IMR-90 (cell line): ENCODE measurements at regions of chr7 and their contacts with region 1.

Region 1: DNA sequence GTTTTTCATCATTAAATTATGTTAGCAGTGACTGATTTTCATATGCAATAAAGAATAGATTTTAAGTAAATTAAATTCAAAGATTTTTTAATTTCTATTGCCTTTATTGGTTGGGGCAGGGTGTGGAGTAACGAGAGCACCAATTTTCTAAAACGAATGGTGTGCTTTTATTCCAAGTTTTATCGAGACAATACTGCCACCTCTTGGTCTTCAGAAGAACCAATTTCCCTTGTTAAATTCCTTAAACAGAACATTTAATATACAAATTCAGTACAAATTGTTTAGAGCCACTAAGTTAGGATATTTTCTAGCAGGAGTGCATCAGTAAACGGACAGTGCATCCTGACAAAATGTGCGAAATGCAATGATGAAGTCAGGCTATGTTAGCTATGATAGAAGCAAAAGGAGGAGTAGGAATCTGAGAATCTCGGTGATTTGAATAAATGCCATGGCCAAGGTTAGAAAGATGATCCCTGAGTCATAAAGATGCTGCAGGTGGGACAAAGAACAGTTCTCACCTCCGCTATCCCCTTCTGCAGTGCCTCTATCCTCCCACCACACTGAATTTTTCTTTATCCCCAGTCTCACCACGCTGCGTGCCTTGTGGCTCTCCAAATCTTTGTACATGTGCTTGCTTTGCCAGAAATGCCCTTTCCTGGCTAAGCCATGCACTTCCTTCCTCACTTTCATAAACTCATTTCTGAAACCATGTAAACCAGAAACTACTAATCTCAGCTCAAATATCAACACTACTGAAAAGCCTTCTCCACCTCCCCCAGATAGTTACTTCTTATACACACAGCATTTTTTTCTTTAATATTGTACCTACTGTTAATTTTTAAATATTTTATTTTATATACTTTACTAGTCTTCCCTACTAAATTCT is 31.9 kb upstream of the AGBL3 start:
- DNase-seq: peak; percentile 54
- ATAC-seq: peak; percentile 60
- H3K4me3 ChIP-seq: no peak overlapping the region
- H3K27ac ChIP-seq: peak overlapping the region; percentile 7; the same call in 1 of the 2 replicates
- H3K4me1 ChIP-seq: no peaks in the 10 kb centered on the region
- H3K27me3 ChIP-seq: no peaks in the 10 kb centered on the region
- CTCF ChIP-seq: peak; percentile 55
- POLR2A ChIP-seq: no peak
- RAD21 ChIP-seq: peak; percentile 58

Region 2: DNA sequence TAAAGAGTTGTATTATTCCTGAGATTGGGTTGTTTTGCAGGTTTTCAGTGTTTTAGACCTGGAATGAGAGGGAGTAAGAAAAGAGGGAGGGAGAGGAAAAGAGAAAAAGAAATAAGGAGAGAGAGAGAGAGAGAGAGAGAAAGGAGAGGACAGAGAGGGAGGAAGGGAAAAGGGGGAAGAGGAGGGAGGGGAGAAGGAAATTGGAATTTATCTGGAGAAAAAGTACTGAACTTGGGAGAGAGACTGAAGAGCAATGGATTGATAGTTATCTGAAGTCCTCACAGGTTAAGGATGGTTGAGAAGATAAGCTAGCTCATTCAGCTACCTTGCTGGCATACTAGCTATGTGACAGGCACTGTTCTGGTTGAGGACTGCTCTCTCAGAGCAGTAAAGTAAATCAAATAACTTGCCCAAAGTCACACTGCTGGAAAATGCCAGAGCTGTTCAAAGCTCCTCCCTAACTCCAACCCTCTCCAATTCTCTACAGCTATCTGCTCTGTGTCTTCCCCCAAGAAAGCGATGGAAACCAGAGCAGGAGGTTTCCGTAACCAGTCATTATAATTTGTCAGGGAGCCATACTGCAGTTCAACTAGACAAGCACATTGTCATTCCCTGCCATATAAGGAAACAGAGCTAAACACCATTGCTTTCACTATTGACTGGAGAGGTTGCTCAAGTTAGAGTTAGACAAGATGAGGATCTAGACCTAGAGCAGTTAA is 164.3 kb before region 1 on chr7:
- CTCF ChIA-PET with region 1: no interaction called
- POLR2A ChIA-PET with region 1: interaction called, 5 read pairs
- dilution Hi-C with region 1: no loop called
- in situ Hi-C with region 1: no loop called
- intact Hi-C with region 1: loop called (anchors 5 kb)
- DNase-seq: peak; percentile 76
- ATAC-seq: peak; percentile 61
- H3K4me3 ChIP-seq: no peak overlapping the region
- H3K27ac ChIP-seq: peak overlapping the region; percentile 72; the same call in 1 of the 2 replicates
- H3K4me1 ChIP-seq: peaks cover 18% of the 10 kb centered on the region
- H3K27me3 ChIP-seq: no peaks in the 10 kb centered on the region
- CTCF ChIP-seq: no peak
- POLR2A ChIP-seq: no peak; the same call in 1 of the 2 replicates
- RAD21 ChIP-seq: no peak

Region 3: DNA sequence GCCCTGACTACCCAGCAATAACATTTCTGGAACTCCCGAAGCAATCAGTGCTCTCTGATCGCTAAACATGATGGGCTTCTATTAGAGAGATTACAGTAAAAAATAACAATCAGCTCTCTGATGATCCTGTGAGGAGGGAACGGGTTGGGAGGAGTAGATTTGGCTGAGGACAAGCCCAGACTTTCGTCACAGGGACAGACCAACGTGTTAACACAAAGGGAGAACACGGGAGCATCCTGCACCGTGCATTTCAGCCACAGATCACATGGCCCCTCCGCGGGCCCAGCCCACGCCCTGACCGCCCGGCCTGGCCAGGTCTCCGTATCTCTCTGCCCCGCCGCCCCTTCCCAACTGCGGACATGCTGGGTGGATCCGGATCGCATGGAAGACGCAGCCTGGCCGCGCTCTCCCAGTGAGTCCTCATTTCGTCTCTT is 63.2 kb before region 1 on chr7:
- CTCF ChIA-PET with region 1: no interaction called
- POLR2A ChIA-PET with region 1: no interaction called
- dilution Hi-C with region 1: no loop called
- in situ Hi-C with region 1: no loop called
- intact Hi-C with region 1: loop called (anchors 1 kb)
- DNase-seq: peak; percentile 92
- ATAC-seq: peak; percentile 72
- H3K4me3 ChIP-seq: peak overlapping the region; percentile 46
- H3K27ac ChIP-seq: peak overlapping the region; percentile 93
- H3K4me1 ChIP-seq: peaks cover 32% of the 10 kb centered on the region
- H3K27me3 ChIP-seq: no peaks in the 10 kb centered on the region
- CTCF ChIP-seq: no peak
- POLR2A ChIP-seq: no peak
- RAD21 ChIP-seq: no peak